ENCODE measurements at regions of chr20 and their contacts with region 1.

Region 1: DNA sequence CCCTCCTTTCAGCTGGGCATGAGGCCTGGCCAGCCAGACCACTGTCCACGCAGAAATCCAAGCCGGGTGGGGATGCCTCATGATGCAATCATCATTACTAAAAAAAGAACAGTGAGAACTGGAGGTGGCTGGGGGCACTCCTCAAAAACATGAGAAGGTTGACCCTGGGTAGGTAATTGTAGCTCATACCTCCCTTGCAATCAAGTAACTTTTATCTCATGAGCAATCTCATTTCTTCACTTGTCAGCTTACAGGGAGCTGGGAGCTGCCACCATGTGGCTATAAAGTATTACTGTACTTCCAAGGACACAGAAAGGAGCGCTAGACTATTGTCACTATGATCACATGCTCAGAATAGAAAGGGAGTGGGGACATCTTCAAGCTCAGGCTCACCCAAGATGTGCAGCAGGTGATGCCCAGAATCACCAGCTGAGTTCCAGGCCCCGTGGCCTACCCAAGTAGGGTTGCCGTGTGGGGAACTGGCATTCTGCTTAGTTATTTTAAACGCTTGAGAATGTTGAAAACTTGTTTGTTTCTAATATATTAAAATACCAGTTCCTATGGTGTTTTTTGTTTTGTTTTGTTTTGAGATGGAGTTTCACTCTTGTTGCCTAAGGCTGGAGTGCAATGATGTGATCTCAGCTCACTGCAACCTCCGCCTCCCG is 3.0 kb upstream of the CDH26 start:
- DNase-seq: peak; percentile 65
- ATAC-seq: peak; percentile 85
- H3K4me3 ChIP-seq: no peak overlapping the region
- H3K27ac ChIP-seq: no peak overlapping the region
- H3K4me1 ChIP-seq: peaks cover 7% of the 10 kb centered on the region; the same call in 1 of the 2 replicates
- H3K27me3 ChIP-seq: no peaks in the 10 kb centered on the region
- CTCF ChIP-seq: peak; percentile 69

Region 2: GRCh38 chr20:59770270-59770669 is 185.0 kb before region 1 on chr20:
- CTCF ChIA-PET with region 1: no interaction called
- POLR2A ChIA-PET with region 1: no interaction called
- intact Hi-C with region 1: loop called (anchors 1 kb)
- DNase-seq: peak; percentile 71
- ATAC-seq: peak; percentile 53
- H3K4me3 ChIP-seq: no peak overlapping the region
- H3K27ac ChIP-seq: no peak overlapping the region
- H3K4me1 ChIP-seq: peaks cover 23% of the 10 kb centered on the region
- H3K27me3 ChIP-seq: no peaks in the 10 kb centered on the region
- CTCF ChIP-seq: peak; percentile 71

Region 3: GRCh38 chr20:59880198-59880597 is 75.1 kb before region 1 on chr20:
- CTCF ChIA-PET with region 1: no interaction called
- POLR2A ChIA-PET with region 1: no interaction called
- intact Hi-C with region 1: no loop called
- DNase-seq: no peak
- ATAC-seq: no peak
- H3K4me3 ChIP-seq: no peak overlapping the region
- H3K27ac ChIP-seq: no peak overlapping the region
- H3K4me1 ChIP-seq: peaks cover 8% of the 10 kb centered on the region; the same call in 1 of the 2 replicates
- H3K27me3 ChIP-seq: no peaks in the 10 kb centered on the region
- CTCF ChIP-seq: no peak

Region 4: DNA sequence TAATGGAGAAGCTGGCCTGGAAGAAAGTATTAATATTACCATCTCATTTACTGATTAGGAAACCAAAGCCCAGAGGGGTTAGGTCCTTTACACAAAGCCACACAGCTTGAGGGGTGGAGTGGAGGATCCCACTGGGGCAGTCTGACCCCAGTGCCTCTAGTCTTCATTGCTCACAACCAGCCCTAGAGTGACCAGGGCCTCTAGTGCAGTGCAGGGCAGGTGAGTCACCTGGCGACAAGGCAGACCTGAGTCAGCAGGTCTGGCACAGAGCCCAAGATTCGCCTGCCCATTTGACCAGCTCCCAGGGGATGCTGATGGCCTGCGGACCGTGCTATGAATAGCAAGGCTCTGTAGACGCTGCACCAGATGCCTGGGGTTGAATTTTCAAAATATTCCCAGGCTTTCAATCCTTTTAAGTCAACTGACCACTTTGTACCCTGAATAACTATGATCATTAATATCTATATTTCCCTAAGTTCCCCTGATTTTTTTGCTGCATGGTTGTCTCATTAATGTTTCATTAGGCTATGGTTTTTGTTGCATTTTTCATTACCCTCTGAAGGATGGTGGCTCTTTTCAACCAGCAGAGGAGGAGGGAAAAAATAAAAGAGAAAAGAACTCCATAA is 33.0 kb after region 1 on chr20:
- CTCF ChIA-PET with region 1: no interaction called
- POLR2A ChIA-PET with region 1: no interaction called
- intact Hi-C with region 1: loop called (anchors 2 kb)
- DNase-seq: peak; percentile 97
- ATAC-seq: peak; percentile 92
- H3K4me3 ChIP-seq: peak overlapping the region; percentile 44; the same call in 1 of the 2 replicates
- H3K27ac ChIP-seq: peak overlapping the region; percentile 73
- H3K4me1 ChIP-seq: peaks cover 36% of the 10 kb centered on the region
- H3K27me3 ChIP-seq: no peaks in the 10 kb centered on the region
- CTCF ChIP-seq: no peak